Activated CD4-positive, alpha-beta T cell treated with anti-CD3 and anti-CD28 coated beads for 36 hours (primary cell): ENCODE measurements at regions of chr19 and their contacts with region 1.

Region 1: DNA sequence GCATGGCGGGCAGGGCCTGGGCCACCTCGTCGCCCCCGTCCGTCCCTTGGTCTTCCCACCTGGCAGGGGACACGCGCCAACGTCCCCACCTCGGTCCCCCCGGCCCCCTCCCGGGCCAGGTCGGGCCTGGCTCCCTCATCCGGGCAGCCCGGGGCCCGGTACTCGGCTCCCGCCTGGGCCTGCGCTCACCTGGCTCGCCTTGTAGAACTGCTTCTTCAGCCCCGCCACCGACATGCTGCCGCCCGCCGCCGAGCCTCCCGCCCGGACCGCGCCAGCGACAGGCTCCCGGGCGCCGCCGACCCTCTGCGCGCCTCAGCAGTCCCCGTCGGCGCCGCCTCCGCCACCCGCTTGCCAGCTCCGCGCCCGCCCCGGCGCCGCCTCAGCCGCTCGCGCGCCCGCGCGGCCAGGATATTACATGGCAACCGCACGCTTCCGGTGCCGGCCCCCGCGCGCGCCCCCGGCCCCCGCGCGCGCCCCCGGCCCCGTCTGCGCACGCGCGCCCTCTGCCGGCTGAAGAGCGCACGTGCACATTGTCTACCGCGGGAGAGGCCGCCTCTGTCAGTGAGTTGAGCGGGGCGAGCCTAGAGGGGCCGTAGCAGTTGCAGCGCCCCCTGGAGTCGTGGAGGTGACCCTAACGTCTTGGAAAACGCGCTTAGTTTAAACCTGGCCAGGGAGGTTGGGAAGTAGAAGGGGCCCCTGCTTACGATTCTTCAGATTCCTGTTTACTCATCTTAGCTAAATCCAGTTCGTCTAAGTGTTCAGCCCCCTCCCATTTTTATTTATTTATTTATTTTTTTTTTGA is at the start of gene SH3GL1:
- DNase-seq: peak; percentile 95
- ATAC-seq: peak; percentile 54
- H3K4me3 Mint-ChIP-seq: peak within 1 kb of the TSS; percentile 93
- H3K27ac Mint-ChIP-seq: peak within 1 kb of the TSS; percentile 95
- H3K4me1 Mint-ChIP-seq: peaks cover 62% of the 10 kb centered on the region
- H3K27me3 Mint-ChIP-seq: no peaks in the 10 kb centered on the region
- total RNA-seq, gene SH3GL1: 42.0 to 46.8 TPM

Region 2: GRCh38 chr19:3557461-3558248 is 842.7 kb before region 1 on chr19 and contains the start of gene MFSD12:
- CTCF ChIA-PET with region 1: no interaction called
- POLR2A ChIA-PET with region 1: no interaction called
- intact Hi-C with region 1: loop called in 1 of 2 experiments (anchors 5 kb)
- DNase-seq: peak; percentile 97
- ATAC-seq: peak; percentile 89
- H3K4me3 Mint-ChIP-seq: peak within 1 kb of the TSS; percentile 96
- H3K27ac Mint-ChIP-seq: peak within 1 kb of the TSS; percentile 92
- H3K4me1 Mint-ChIP-seq: peaks cover 36% of the 10 kb centered on the region
- H3K27me3 Mint-ChIP-seq: no peaks in the 10 kb centered on the region
- total RNA-seq, gene MFSD12: 44.7 to 46.7 TPM

Region 3: DNA sequence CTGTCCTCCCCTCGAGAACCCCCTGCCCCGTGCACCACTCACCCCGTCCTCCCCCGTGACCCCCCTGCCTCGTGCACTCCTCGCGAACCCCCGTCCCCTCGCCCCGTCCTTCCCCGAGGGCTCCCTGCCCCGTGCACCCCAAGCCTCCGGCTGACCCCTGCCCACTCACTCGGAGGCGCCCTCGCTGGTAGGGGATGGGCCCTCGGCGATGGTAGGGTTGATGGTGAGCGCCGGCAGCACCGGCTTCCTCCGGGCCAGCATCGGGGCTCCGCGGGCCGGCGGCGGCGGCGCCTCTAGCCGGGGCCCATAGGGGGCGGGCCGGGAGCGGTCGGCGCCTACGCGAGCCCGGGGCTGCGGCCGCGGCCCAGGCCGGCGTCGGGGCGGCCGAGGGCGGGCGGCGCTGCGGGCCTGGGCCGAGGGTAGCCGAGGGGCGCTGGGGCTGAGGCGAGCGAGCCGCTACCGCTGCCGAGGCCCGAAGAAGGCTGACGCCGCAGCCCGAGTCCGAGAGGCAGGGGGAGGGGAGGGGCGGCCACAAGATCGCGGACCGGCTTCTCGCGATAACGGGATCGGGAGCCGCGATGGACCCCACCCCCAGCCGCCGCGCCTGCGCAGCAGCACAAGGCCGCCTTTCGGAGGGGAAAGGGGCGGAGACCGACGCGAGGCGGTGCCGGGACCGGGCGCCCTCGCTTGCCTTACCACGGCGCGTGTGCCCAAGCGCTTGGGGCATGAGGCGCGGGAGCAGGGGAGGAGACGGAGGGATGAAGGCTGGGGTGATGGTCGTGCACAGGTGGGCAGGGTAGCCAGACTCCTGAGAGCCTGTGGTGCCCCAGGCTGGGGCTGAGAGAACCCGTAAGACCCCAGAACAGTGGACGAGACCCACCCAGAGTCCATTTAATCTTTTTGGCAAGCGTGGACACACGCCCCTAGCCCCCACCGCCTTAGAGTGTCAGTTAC is 276.4 kb before region 1 on chr19 and contains the start of gene MAP2K2:
- CTCF ChIA-PET with region 1: no interaction called
- POLR2A ChIA-PET with region 1: no interaction called
- intact Hi-C with region 1: loop called in 1 of 2 experiments (anchors 1 kb)
- DNase-seq: peak; percentile 98
- ATAC-seq: peak; percentile 96
- H3K4me3 Mint-ChIP-seq: peak within 1 kb of the TSS; percentile 97
- H3K27ac Mint-ChIP-seq: peak within 1 kb of the TSS; percentile 92
- H3K4me1 Mint-ChIP-seq: peaks cover 18% of the 10 kb centered on the region
- H3K27me3 Mint-ChIP-seq: no peaks in the 10 kb centered on the region
- total RNA-seq, gene MAP2K2: 108 to 133 TPM

Region 4: GRCh38 chr19:4304530-4305252 is 95.6 kb before region 1 on chr19 and contains the start of gene FSD1:
- CTCF ChIA-PET with region 1: interaction called, 3 read pairs
- POLR2A ChIA-PET with region 1: no interaction called
- intact Hi-C with region 1: loop called in 1 of 2 experiments (anchors 1 kb)
- DNase-seq: peak; percentile 90
- ATAC-seq: peak; percentile 82
- H3K4me3 Mint-ChIP-seq: peak within 1 kb of the TSS; percentile 66
- H3K27ac Mint-ChIP-seq: peak within 1 kb of the TSS; percentile 72
- H3K4me1 Mint-ChIP-seq: peaks cover 34% of the 10 kb centered on the region
- H3K27me3 Mint-ChIP-seq: no peaks in the 10 kb centered on the region
- total RNA-seq, gene FSD1: 23.1 to 25.3 TPM

Region 5: DNA sequence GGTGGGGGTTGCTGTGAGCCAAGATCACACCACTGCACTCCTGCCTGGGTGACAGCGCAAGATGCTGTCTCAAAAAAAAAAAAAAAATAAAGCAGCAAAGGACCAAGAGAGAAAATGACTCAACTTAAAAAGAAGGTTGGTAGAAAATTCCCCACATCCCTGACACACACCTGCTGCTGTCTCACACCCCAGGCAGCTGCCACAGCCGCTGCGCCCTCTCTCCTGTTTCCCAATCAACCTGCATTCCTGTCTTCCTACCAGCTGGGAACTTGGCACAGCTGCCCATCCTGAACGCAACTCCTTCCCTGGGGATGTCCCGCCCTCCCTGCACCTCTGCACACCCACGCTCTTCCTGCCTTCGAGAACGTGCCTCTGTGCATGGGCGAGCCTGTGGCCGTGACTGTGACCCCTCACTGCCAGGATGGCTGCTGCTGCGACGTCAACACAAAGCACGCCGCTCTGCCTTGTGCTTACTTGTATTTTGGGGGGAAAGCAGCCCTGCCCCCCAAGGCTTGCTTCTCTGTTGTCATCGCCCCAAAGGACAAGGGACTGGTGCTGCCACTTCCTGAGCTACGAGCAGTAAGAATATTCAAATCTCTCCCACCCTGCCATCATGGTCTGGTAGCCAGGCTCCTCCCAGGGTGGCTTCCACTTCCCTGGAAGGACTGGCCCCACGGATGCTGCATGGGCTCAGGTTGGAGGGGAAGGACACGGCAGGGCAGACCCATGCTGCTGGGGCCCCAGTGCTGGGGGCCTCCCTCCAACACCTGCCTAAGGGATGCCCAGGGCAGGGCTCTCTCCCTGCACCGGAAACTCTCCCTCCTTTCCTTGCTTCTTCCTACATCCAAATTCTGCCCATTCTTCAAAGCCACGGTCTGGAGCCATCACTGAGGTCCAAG is 20.7 kb before region 1 on chr19:
- CTCF ChIA-PET with region 1: interaction called, 13 read pairs
- POLR2A ChIA-PET with region 1: no interaction called
- intact Hi-C with region 1: loop called (anchors 1 kb)
- DNase-seq: peak; percentile 71
- ATAC-seq: peak; percentile 75
- H3K4me3 Mint-ChIP-seq: peak overlapping the region; percentile 71
- H3K27ac Mint-ChIP-seq: peak overlapping the region; percentile 89
- H3K4me1 Mint-ChIP-seq: peaks cover 64% of the 10 kb centered on the region
- H3K27me3 Mint-ChIP-seq: no peaks in the 10 kb centered on the region

Region 6: DNA sequence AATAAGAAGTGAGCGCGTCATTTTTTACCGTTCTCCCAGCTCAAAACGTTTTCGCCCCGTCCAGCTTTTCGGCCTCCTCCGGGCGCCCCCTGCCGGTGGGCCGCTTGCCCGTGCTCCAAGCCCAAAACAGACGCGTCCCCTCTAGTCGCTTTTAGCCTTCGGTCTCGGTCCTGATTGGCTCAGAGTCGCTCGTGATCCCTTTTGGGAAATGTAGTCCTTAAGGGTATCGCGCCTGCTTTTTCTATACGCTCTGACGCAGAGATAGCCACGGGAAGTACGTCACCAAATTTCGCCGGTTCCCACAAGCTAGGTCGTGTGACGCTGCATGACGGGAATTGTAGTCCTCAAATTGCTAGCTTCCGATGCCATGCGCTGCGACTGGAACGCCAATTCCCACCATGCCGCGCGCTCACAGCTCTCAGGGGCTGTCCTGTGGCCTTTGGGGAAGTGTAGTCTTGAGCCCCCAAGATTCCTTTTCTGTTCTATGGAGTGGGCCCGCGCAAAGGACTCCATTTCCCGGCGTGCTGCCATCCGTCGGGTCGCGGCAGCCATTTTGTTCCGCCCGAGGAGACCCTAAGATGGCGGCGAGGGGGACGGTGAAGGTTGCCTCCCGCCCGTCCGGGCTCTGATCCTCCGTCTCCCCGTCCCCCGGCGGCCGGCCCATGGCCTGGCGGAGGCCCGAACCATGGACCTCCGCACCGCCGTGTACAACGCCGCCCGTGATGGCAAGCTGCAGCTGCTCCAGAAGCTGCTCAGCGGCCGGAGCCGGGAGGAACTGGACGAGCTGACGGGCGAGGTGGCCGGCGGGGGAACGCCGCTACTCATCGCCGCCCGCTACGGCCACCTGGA is 391.1 kb after region 1 on chr19 and contains the start of gene FEM1A:
- CTCF ChIA-PET with region 1: no interaction called
- POLR2A ChIA-PET with region 1: no interaction called
- intact Hi-C with region 1: loop called in 1 of 2 experiments (anchors 1 kb)
- DNase-seq: peak; percentile 99
- ATAC-seq: peak; percentile 97
- H3K4me3 Mint-ChIP-seq: peak within 1 kb of the TSS; percentile 84
- H3K27ac Mint-ChIP-seq: peak within 1 kb of the TSS; percentile 85
- H3K4me1 Mint-ChIP-seq: peaks cover 40% of the 10 kb centered on the region
- H3K27me3 Mint-ChIP-seq: no peaks in the 10 kb centered on the region
- total RNA-seq, gene FEM1A: 9.2 to 10.6 TPM